ENCODE measurements at regions of chr16 and their contacts with region 1.

Region 1: DNA sequence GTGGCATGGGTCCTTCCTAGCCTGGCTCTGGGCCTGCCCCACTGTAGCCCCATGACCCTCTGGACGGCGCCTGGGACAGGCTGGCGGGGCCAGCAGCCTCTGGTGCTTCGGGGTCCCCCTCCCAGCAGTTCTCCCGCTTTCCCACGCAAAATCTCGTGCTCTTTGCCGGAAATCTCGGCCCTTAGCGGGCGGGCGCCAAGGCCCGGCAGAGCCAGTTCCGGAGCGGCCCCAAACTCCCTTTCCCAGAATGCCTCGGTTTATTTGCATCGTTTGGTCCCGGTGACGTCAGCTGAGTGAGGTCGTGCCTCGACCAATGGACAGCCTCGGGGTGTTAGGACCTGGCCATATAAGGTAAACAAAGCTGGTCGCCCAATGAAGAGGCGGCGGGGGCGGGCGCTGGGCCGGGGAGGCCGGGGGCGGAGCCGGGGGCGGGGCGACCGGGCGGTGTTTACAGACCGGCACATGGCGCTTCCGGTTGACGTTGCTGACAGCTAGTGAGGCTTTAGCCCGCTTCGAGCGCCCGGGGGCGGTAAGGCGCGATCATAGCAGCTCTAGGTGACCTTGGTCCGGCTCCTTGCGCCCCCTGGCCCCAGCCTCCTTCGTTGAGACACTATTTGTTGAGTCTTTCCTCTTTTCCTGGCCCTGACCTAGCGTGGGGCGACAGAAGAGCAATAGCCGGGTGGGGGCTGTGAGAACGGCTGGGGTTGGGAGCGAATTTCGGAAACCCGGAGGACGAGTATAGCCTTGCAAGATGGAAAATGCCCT is 1.5 kb upstream of the UBALD1 start:
- DNase-seq: peak; percentile 94
- ATAC-seq: peak; percentile 82
- H3K4me3 Mint-ChIP-seq: peak overlapping the region; percentile 92
- H3K27ac Mint-ChIP-seq: peak overlapping the region; percentile 98
- H3K4me1 Mint-ChIP-seq: peaks cover 33% of the 10 kb centered on the region
- H3K27me3 Mint-ChIP-seq: no peaks in the 10 kb centered on the region
- CTCF ChIP-seq: no peak

Region 2: GRCh38 chr16:4350787-4351659 is 265.2 kb before region 1 on chr16 and contains the start of gene PAM16:
- CTCF ChIA-PET with region 1: no interaction called
- POLR2A ChIA-PET with region 1: no interaction called
- intact Hi-C with region 1: loop called (anchors 1 kb)
- DNase-seq: peak; percentile 99
- ATAC-seq: peak; percentile 93
- H3K4me3 Mint-ChIP-seq: peak within 1 kb of the TSS; percentile 91
- H3K27ac Mint-ChIP-seq: peak within 1 kb of the TSS; percentile 77
- H3K4me1 Mint-ChIP-seq: peaks cover 16% of the 10 kb centered on the region
- H3K27me3 Mint-ChIP-seq: no peaks in the 10 kb centered on the region
- CTCF ChIP-seq: no peak
- total RNA-seq, gene PAM16: 42.4 and 58.1 TPM in 2 replicates

Region 3: GRCh38 chr16:4475880-4476788 is 140.1 kb before region 1 on chr16 and contains the start of gene HMOX2:
- CTCF ChIA-PET with region 1: interaction called, 6 read pairs
- POLR2A ChIA-PET with region 1: interaction called, 12 read pairs
- intact Hi-C with region 1: loop called (anchors 1 kb)
- DNase-seq: peak; percentile 98
- ATAC-seq: peak; percentile 91
- H3K4me3 Mint-ChIP-seq: peak within 1 kb of the TSS; percentile 85
- H3K27ac Mint-ChIP-seq: peak within 1 kb of the TSS; percentile 80
- H3K4me1 Mint-ChIP-seq: peaks cover 37% of the 10 kb centered on the region
- H3K27me3 Mint-ChIP-seq: no peaks in the 10 kb centered on the region
- CTCF ChIP-seq: no peak
- total RNA-seq, gene HMOX2: 30.8 and 32.1 TPM in 2 replicates

Region 4: DNA sequence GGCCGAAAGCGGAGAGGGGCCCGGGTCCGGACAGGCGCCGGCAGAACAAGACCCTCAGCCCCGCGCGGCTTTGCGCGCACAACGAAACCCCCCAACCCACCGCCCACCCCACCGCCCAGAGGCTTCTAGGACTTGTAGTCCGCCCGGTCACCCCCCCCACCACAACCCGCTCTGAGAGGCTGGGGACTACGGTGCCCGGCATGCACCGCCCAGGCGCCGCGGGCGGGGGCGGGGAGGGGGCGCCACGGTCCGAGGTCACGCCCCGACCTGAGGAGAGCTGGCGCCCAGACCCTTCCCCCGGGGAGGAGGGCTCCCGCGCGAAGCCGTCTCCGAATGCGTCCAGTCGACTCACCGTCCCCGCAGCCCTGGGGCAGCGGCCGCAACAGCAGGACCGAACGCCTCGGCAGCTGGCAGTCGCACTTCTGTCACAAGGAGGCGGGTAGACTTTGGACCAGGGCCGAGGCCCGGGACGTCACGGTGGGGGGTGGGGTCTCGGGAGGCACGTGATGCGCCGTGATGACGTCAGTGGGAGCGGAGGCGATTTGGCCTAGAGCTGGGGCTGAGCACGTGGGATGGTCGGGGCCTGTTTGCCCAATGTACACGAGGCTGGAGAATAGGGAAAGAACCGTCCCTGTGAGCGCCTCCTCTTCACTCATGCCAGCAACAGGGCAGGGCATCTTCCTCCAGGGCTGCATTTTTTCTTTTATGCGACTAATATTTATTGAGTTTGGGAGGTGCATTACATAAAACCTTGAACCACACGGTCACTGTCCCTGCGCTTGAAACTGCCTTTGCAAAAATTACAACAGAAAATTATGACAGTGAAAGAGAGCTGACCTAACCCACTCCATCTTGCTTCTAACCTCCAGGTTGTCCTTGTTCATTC is 77.6 kb before region 1 on chr16 and contains the start of gene CDIP1:
- CTCF ChIA-PET with region 1: interaction called, 3 read pairs
- POLR2A ChIA-PET with region 1: interaction called, 13 read pairs
- intact Hi-C with region 1: loop called (anchors 2 kb)
- DNase-seq: peak; percentile 89
- ATAC-seq: peak; percentile 91
- H3K4me3 Mint-ChIP-seq: peak within 1 kb of the TSS; percentile 76
- H3K27ac Mint-ChIP-seq: peak within 1 kb of the TSS; percentile 73
- H3K4me1 Mint-ChIP-seq: peaks cover 15% of the 10 kb centered on the region
- H3K27me3 Mint-ChIP-seq: peaks cover 1% of the 10 kb centered on the region
- CTCF ChIP-seq: no peak
- total RNA-seq, gene CDIP1: 12.5 and 12.9 TPM in 2 replicates

Region 5: DNA sequence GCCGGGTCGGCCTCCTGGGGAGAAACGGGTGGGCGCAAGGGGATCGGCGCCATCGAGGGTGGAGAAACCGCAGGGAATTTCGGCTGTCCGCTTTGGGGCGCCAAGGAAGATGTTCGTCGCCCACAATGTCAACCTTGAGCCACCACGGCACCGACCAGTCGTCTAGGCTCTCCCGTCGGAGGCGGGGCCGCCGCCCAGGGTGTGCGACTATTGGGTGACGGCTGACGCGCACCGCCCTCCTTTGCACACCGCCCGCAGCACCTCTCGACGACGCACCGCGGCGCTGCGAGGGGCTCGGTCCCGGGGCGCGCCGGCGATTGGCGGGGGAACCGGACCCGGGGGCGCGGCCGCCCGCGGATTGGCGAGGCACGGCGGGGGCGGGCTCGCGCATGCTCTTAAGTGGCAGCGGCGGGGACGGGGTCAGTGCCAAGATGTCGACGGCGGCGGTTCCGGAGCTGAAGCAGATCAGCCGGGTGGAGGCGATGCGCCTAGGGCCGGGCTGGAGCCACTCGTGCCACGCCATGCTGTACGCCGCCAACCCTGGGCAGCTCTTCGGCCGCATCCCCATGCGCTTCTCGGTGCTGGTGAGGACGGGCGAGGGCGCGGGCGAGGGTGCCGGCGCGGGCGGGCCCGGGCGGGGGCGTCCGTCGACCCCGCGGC is 77.2 kb after region 1 on chr16 and contains the start of gene NUDT16L1:
- CTCF ChIA-PET with region 1: interaction called, 3 read pairs
- POLR2A ChIA-PET with region 1: interaction called, 8 read pairs
- intact Hi-C with region 1: loop called (anchors 1 kb)
- DNase-seq: peak; percentile 98
- ATAC-seq: peak; percentile 96
- H3K4me3 Mint-ChIP-seq: peak within 1 kb of the TSS; percentile 85
- H3K27ac Mint-ChIP-seq: peak within 1 kb of the TSS; percentile 69
- H3K4me1 Mint-ChIP-seq: peaks cover 9% of the 10 kb centered on the region
- H3K27me3 Mint-ChIP-seq: no peaks in the 10 kb centered on the region
- CTCF ChIP-seq: no peak
- total RNA-seq, gene NUDT16L1: 32.0 and 32.9 TPM in 2 replicates

Region 6: DNA sequence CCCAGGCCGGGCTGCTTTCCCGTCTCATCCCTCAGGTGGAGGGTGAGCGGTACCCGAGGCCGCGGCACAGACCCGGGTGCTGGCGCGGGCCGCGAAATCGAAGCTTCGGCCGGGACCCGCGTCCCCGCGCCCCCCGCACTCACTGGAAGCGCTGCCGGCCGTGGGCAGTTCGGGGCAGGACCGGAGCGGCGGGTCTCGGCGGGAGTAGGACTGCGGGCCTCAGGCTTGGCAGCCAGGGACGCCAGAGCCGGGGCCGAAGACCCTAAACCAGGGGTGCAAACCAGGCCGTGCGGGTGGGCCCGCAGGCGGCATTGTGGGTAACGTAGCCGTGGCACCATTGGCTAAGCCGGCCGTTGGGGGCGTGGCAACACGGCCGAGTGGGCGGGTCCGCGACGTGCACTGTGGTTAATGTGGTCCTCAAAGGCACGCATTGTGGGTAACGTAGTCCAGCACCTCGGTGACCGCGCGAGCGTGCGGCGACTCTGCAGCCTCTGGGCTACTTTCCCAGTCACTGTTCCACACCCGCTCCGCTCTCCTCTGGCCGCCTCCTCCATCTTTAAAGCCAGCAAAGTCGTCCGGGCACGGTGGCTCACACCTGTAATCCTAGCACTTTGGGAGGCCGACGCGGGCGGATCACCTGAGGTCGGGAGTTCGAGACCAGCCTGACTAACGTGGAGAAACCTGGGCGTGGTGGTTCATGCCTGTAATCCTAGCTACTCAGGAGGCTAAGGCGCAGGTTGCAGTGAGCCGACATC is 150.8 kb after region 1 on chr16 and contains the start of gene ZNF500:
- CTCF ChIA-PET with region 1: no interaction called
- POLR2A ChIA-PET with region 1: interaction called, 8 read pairs
- intact Hi-C with region 1: loop called (anchors 1 kb)
- DNase-seq: peak; percentile 97
- ATAC-seq: peak; percentile 91
- H3K4me3 Mint-ChIP-seq: peak within 1 kb of the TSS; percentile 93
- H3K27ac Mint-ChIP-seq: peak within 1 kb of the TSS; percentile 91
- H3K4me1 Mint-ChIP-seq: peaks cover 24% of the 10 kb centered on the region
- H3K27me3 Mint-ChIP-seq: no peaks in the 10 kb centered on the region
- CTCF ChIP-seq: no peak
- total RNA-seq, gene ZNF500: 14.3 and 19.1 TPM in 2 replicates

Measured in activated B cell treated with CpG ODN at 0.5 μM for 24 hours (primary cell).